Mammary epithelial cell (primary cell): ENCODE measurements at regions of chr1 and their contacts with region 1.

Region 1: GRCh38 chr1:20194757-20195461 is 8.6 kb upstream of the PLA2G2C start:
- DNase-seq: peak; percentile 46
- H3K4me3 ChIP-seq: no peak overlapping the region
- H3K27ac ChIP-seq: peak overlapping the region; percentile 24
- H3K4me1 ChIP-seq: peaks cover 53% of the 10 kb centered on the region
- H3K27me3 ChIP-seq: no peaks in the 10 kb centered on the region
- CTCF ChIP-seq: peak; percentile 83 to 84

Region 2: DNA sequence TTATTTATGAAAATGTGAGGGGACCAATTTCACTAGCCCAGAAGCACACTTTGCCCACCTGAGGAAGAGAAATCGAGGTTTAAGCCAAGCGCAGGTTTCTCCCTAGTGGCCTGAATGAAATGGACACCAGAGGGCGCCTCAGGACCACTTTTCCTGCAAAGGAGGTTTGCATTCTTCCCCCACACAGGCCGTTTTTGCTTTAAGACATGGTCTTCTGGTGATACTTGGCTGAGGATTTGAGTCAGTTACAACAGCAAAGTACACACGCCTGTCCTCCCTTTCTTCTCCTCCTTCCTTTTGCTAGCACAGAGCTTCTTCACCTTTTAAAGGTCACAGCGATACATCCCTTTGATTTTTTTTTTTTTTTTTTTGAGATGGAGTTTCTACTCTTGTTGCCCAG is 276.9 kb before region 1 on chr1:
- CTCF ChIA-PET with region 1: no interaction called
- dilution Hi-C with region 1: no loop called
- in situ Hi-C with region 1: no loop called
- intact Hi-C with region 1: loop called (anchors 1 kb)
- DNase-seq: peak; percentile 60
- H3K4me3 ChIP-seq: no peak overlapping the region
- H3K27ac ChIP-seq: no peak overlapping the region
- H3K4me1 ChIP-seq: no peaks in the 10 kb centered on the region
- H3K27me3 ChIP-seq: no peaks in the 10 kb centered on the region
- CTCF ChIP-seq: peak; percentile 90 to 95

Region 3: DNA sequence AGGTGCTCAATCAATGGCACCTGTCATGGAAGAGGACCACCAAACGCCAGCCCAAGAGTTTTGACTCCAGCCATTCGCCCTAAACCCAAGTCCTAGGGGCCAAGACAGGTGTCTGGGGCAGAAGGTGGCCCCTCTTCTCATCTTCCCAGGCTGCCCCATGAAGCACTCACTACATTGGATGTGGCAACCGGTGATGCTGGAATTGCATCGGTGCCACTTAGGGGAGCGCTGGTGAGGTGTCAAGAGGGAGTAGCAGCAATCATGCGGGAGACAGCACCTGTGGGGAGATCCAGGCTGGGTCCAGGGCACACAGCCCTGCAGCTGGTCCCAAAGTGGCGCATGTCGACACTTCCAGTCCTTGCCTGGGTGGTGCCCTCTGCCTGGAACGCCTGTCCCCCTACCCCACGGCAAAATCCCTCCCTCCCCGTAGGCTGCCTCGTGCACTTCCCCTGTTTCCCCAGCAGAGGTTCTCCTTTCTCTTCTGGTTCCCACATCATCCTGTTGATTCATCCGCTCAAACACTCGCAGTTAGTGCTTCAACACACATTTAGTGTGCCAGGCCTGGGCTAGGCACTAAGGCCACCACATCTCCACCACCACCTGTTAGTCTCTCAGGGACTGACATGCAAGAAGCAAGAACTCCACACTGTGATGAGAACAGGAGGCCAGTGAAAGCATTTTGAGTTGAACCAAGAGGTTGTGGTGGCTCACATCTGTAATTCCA is 94.1 kb before region 1 on chr1:
- CTCF ChIA-PET with region 1: no interaction called
- dilution Hi-C with region 1: no loop called
- in situ Hi-C with region 1: no loop called
- intact Hi-C with region 1: loop called (anchors 1 kb)
- DNase-seq: peak; percentile 57
- H3K4me3 ChIP-seq: no peak overlapping the region
- H3K27ac ChIP-seq: no peak overlapping the region
- H3K4me1 ChIP-seq: peaks cover 12% of the 10 kb centered on the region
- H3K27me3 ChIP-seq: no peaks in the 10 kb centered on the region
- CTCF ChIP-seq: peak; percentile 86 to 93

Region 4: GRCh38 chr1:20110679-20111078 is 84.2 kb before region 1 on chr1:
- CTCF ChIA-PET with region 1: no interaction called
- dilution Hi-C with region 1: loop called (anchors 5 kb)
- in situ Hi-C with region 1: no loop called
- intact Hi-C with region 1: no loop called
- DNase-seq: peak; percentile 98
- H3K4me3 ChIP-seq: no peak overlapping the region
- H3K27ac ChIP-seq: peak overlapping the region; percentile 75
- H3K4me1 ChIP-seq: peaks cover 22% of the 10 kb centered on the region
- H3K27me3 ChIP-seq: no peaks in the 10 kb centered on the region
- CTCF ChIP-seq: no peak

Region 5: GRCh38 chr1:20165522-20165951 is 29.4 kb before region 1 on chr1:
- CTCF ChIA-PET with region 1: no interaction called
- dilution Hi-C with region 1: no loop called
- in situ Hi-C with region 1: no loop called
- intact Hi-C with region 1: loop called (anchors 2 kb)
- DNase-seq: peak; percentile 52
- H3K4me3 ChIP-seq: no peak overlapping the region
- H3K27ac ChIP-seq: no peak overlapping the region
- H3K4me1 ChIP-seq: peaks cover 29% of the 10 kb centered on the region
- H3K27me3 ChIP-seq: no peaks in the 10 kb centered on the region
- CTCF ChIP-seq: peak; percentile 55 to 64

Region 6: GRCh38 chr1:20279509-20279908 is 84.6 kb after region 1 on chr1:
- CTCF ChIA-PET with region 1: no interaction called
- dilution Hi-C with region 1: no loop called
- in situ Hi-C with region 1: no loop called
- intact Hi-C with region 1: no loop called
- DNase-seq: peak; percentile 78
- H3K4me3 ChIP-seq: no peak overlapping the region
- H3K27ac ChIP-seq: no peak overlapping the region
- H3K4me1 ChIP-seq: peaks cover 13% of the 10 kb centered on the region
- H3K27me3 ChIP-seq: no peaks in the 10 kb centered on the region
- CTCF ChIP-seq: no peak

Region 7: GRCh38 chr1:20302093-20302471 is 107.2 kb after region 1 on chr1:
- CTCF ChIA-PET with region 1: interaction called, 13 read pairs
- dilution Hi-C with region 1: no loop called
- in situ Hi-C with region 1: no loop called
- intact Hi-C with region 1: no loop called
- DNase-seq: peak; percentile 40
- H3K4me3 ChIP-seq: no peak overlapping the region
- H3K27ac ChIP-seq: no peak overlapping the region
- H3K4me1 ChIP-seq: no peaks in the 10 kb centered on the region
- H3K27me3 ChIP-seq: peaks cover 7% of the 10 kb centered on the region
- CTCF ChIP-seq: no peak

Region 8: GRCh38 chr1:20400341-20401177 is 205.7 kb after region 1 on chr1:
- CTCF ChIA-PET with region 1: no interaction called
- dilution Hi-C with region 1: no loop called
- in situ Hi-C with region 1: no loop called
- intact Hi-C with region 1: no loop called
- DNase-seq: no peak
- H3K4me3 ChIP-seq: no peak overlapping the region
- H3K27ac ChIP-seq: no peak overlapping the region
- H3K4me1 ChIP-seq: no peaks in the 10 kb centered on the region
- H3K27me3 ChIP-seq: no peaks in the 10 kb centered on the region
- CTCF ChIP-seq: no peak

Region 9: DNA sequence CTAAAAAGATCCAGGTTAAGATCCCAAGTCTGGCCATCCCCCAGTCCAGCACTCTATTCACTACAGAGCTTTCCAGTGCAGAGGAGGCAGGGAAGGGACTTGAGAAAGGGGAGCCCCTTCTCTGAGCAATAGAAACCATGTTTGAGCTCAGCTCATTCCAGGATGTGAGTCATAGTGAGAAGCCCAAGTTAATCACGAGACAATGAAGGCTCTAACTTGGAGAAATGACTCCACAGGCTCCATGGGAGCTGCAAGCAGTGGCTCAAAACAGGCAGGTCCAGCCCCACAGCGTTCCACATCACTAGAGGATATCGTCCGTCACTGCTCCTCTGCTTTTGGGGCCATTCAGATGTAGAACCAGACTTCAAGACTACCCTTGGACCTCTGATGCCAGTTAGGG is 232.0 kb after region 1 on chr1:
- CTCF ChIA-PET with region 1: no interaction called
- dilution Hi-C with region 1: no loop called
- in situ Hi-C with region 1: no loop called
- intact Hi-C with region 1: no loop called
- DNase-seq: peak; percentile 91
- H3K4me3 ChIP-seq: no peak overlapping the region
- H3K27ac ChIP-seq: peak overlapping the region; percentile 35
- H3K4me1 ChIP-seq: peaks cover 14% of the 10 kb centered on the region
- H3K27me3 ChIP-seq: no peaks in the 10 kb centered on the region
- CTCF ChIP-seq: no peak

Region 10: DNA sequence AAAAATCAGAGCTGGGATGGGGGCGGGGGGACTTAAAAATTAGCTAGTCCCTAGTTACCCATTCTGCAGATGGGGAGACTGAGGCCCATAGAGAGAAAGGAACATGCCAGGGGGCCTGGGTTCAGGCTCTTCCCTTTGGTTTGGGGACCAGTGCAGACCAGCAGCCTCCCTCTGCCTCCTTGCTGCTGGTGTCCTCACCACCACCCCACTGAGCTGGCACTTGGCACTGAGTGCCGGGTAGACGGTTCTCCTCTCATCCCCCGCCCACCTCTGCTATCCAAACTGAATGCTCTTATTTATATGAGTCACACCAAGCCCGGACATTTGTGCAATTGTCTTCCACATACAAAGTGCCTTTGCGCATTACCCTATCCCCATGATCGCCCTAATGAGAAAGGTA is 251.9 kb after region 1 on chr1:
- CTCF ChIA-PET with region 1: no interaction called
- dilution Hi-C with region 1: no loop called
- in situ Hi-C with region 1: no loop called
- intact Hi-C with region 1: no loop called
- DNase-seq: peak; percentile 57
- H3K4me3 ChIP-seq: no peak overlapping the region
- H3K27ac ChIP-seq: no peak overlapping the region
- H3K4me1 ChIP-seq: peaks cover 11% of the 10 kb centered on the region
- H3K27me3 ChIP-seq: no peaks in the 10 kb centered on the region
- CTCF ChIP-seq: no peak